IMR-90 (cell line): ENCODE measurements at regions of chr2 and their contacts with region 1.

Region 1: DNA sequence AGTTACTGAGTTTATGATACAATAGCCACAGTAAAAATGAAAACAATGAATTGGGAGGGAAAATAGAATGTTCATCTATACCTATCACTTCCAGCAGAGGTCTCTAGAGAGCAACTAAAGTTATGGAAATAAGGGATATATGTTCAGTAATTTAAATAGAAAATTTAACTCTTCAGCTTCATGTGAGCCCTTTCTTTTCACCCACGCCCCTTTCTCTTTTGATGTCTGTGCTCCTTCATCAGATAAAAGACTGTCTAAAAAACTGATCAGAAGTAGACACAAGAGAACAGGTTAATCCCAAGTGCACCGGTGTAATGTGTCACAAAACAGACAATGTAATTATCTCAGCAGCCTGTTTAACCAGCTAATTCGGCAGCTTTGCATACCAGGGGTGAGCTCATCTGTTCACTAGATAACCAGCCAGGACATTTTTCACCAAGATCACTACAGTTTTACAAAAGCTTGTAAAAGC is 238.5 kb upstream of the ERBB4 start:
- DNase-seq: peak; percentile 46
- ATAC-seq: peak; percentile 96
- H3K4me3 ChIP-seq: peak overlapping the region; percentile 52; the same call in 1 of the 2 replicates
- H3K27ac ChIP-seq: no peak overlapping the region
- H3K4me1 ChIP-seq: no peaks in the 10 kb centered on the region
- H3K27me3 ChIP-seq: no peaks in the 10 kb centered on the region
- CTCF ChIP-seq: peak; percentile 76
- POLR2A ChIP-seq: no peak
- RAD21 ChIP-seq: peak; percentile 74

Region 2: GRCh38 chr2:212595037-212595654 is 181.9 kb before region 1 on chr2:
- CTCF ChIA-PET with region 1: no interaction called
- POLR2A ChIA-PET with region 1: no interaction called
- dilution Hi-C with region 1: no loop called
- in situ Hi-C with region 1: no loop called
- intact Hi-C with region 1: loop called (anchors 10 kb)
- DNase-seq: peak; percentile 46
- ATAC-seq: 0 out of 2 replicates have a peak, but pooled peaks have one; percentile 28
- H3K4me3 ChIP-seq: no peak overlapping the region
- H3K27ac ChIP-seq: no peak overlapping the region
- H3K4me1 ChIP-seq: no peaks in the 10 kb centered on the region
- H3K27me3 ChIP-seq: no peaks in the 10 kb centered on the region
- CTCF ChIP-seq: peak; percentile 31
- POLR2A ChIP-seq: no peak
- RAD21 ChIP-seq: peak; percentile 28; the same call in 1 of the 2 replicates

Region 3: GRCh38 chr2:212686285-212686895 is 90.7 kb before region 1 on chr2:
- CTCF ChIA-PET with region 1: interaction called, 3 read pairs
- POLR2A ChIA-PET with region 1: no interaction called
- dilution Hi-C with region 1: no loop called
- in situ Hi-C with region 1: loop called (anchors 10 kb)
- intact Hi-C with region 1: loop called (anchors 1 kb)
- DNase-seq: peak; percentile 73
- ATAC-seq: peak; percentile 82
- H3K4me3 ChIP-seq: no peak overlapping the region
- H3K27ac ChIP-seq: no peak overlapping the region
- H3K4me1 ChIP-seq: peaks cover 3% of the 10 kb centered on the region
- H3K27me3 ChIP-seq: no peaks in the 10 kb centered on the region
- CTCF ChIP-seq: peak; percentile 97
- POLR2A ChIP-seq: 0 out of 2 replicates have a peak, but pooled peaks have one; percentile 34
- RAD21 ChIP-seq: peak; percentile 94

Region 4: GRCh38 chr2:212892193-212892592 is 115.1 kb after region 1 on chr2:
- CTCF ChIA-PET with region 1: interaction called, 14 read pairs
- POLR2A ChIA-PET with region 1: no interaction called
- dilution Hi-C with region 1: no loop called
- in situ Hi-C with region 1: loop called (anchors 10 kb)
- intact Hi-C with region 1: loop called (anchors 1 kb)
- DNase-seq: peak; percentile 64
- ATAC-seq: peak; percentile 69
- H3K4me3 ChIP-seq: no peak overlapping the region
- H3K27ac ChIP-seq: no peak overlapping the region
- H3K4me1 ChIP-seq: no peaks in the 10 kb centered on the region
- H3K27me3 ChIP-seq: no peaks in the 10 kb centered on the region
- CTCF ChIP-seq: peak; percentile 54
- POLR2A ChIP-seq: no peak
- RAD21 ChIP-seq: peak; percentile 61

Region 5: GRCh38 chr2:212974692-212975091 is 197.6 kb after region 1 on chr2:
- CTCF ChIA-PET with region 1: no interaction called
- POLR2A ChIA-PET with region 1: no interaction called
- dilution Hi-C with region 1: no loop called
- in situ Hi-C with region 1: no loop called
- intact Hi-C with region 1: loop called (anchors 10 kb)
- DNase-seq: peak; percentile 85
- ATAC-seq: peak; percentile 74
- H3K4me3 ChIP-seq: no peak overlapping the region
- H3K27ac ChIP-seq: no peak overlapping the region
- H3K4me1 ChIP-seq: peaks cover 15% of the 10 kb centered on the region
- H3K27me3 ChIP-seq: no peaks in the 10 kb centered on the region
- CTCF ChIP-seq: no peak
- POLR2A ChIP-seq: no peak
- RAD21 ChIP-seq: no peak

Region 6: DNA sequence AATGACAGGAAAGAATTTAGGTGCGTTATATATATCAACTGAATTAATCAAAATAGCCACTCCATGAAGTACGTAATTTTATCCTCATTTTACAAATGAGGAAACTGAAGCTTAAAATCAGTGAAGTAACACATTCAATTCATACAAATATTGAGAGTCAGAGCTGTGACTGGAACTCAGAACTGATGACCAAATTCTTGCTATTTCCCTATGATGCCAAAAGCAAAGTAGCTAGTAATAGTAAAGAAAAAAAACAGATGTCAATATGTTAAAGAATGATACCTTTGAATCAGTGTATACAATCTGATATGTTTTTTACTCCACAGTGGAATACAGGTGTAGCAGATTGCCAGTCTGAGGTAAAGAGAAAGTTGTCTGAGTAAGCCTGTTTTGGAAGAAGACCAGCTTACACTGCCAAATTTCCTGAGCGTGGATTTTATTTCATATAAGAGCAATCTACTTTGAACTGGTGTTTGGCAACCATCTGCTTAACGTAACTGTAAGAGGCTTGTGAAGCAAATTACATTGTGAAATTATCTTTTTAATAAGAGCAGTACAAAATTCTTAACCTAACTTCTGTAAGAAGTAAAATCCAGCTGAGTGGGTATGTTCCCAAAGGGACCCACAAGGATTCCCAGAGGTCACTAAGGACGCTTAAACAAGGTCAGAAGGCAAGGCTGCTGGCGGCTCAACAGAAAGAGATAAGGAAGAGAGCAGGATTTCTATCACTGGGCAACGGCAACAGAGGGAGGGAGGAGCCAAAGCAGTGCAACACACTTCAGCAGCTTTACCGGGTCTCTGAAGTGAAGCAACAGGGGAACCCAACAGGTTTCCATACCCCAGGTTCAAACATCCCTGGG is 288.8 kb after region 1 on chr2:
- CTCF ChIA-PET with region 1: no interaction called
- POLR2A ChIA-PET with region 1: no interaction called
- dilution Hi-C with region 1: no loop called
- in situ Hi-C with region 1: no loop called
- intact Hi-C with region 1: loop called (anchors 5 kb)
- DNase-seq: peak; percentile 50
- ATAC-seq: peak; percentile 74
- H3K4me3 ChIP-seq: no peak overlapping the region; the same call in 1 of the 2 replicates
- H3K27ac ChIP-seq: no peak overlapping the region
- H3K4me1 ChIP-seq: peaks cover 3% of the 10 kb centered on the region; the same call in 1 of the 2 replicates
- H3K27me3 ChIP-seq: no peaks in the 10 kb centered on the region
- CTCF ChIP-seq: no peak
- POLR2A ChIP-seq: no peak
- RAD21 ChIP-seq: no peak

Region 7: DNA sequence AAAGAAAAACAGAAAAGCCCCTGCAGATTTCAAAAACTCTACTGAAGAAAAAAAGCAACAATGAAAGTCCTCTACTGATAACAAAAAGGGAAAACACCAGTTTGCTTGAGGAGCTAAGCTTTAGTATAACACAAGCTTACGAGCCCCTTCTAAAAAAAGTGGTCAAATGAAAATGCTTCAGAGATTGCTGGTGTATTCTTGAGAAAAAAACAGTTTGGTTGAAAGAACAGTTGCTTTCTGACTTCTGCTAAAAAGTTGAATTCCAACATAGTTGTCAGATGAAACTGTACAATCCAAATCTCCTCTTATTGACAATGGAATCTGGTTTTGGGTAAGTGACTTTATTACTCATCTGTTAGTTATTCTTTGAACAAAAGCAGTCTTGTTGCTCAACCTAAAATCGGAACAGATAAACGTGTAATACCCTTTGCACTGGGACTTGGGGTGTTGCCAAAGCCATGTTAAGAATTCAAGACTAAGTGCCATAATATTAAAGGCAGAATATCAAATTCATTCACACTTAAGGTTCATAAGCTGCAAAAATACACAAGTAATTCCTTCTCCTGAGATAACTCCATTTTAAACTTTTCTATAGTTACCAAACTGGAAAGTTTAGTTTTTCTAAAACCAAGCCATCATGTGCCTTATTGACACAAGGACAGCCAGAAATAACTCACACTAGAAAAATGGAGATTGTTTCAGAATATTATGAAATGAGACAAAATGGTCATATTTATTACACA is 461.9 kb after region 1 on chr2:
- CTCF ChIA-PET with region 1: no interaction called
- POLR2A ChIA-PET with region 1: no interaction called
- dilution Hi-C with region 1: no loop called
- in situ Hi-C with region 1: no loop called
- intact Hi-C with region 1: loop called (anchors 5 kb)
- DNase-seq: peak; percentile 86
- ATAC-seq: peak; percentile 75
- H3K4me3 ChIP-seq: no peak overlapping the region
- H3K27ac ChIP-seq: peak overlapping the region; percentile 77; the same call in 1 of the 2 replicates
- H3K4me1 ChIP-seq: peaks cover 8% of the 10 kb centered on the region
- H3K27me3 ChIP-seq: no peaks in the 10 kb centered on the region
- CTCF ChIP-seq: no peak
- POLR2A ChIP-seq: no peak
- RAD21 ChIP-seq: no peak